Activated CD8-positive, alpha-beta T cell treated with anti-CD3 and anti-CD28 coated beads for 36 hours (primary cell): ENCODE measurements at regions of chr1 and their contacts with region 1.

Region 1: GRCh38 chr1:66503841-66504470 is 30.0 kb upstream of the SGIP1 start:
- DNase-seq: peak; percentile 70
- ATAC-seq: peak; percentile 74
- H3K4me3 Mint-ChIP-seq: no peak overlapping the region
- H3K27ac Mint-ChIP-seq: no peak overlapping the region
- H3K4me1 Mint-ChIP-seq: no peaks in the 10 kb centered on the region
- H3K27me3 Mint-ChIP-seq: peaks cover 11% of the 10 kb centered on the region
- CTCF ChIP-seq: peak; percentile 80

Region 2: GRCh38 chr1:66253330-66253921 is 250.5 kb before region 1 on chr1:
- CTCF ChIA-PET with region 1: interaction called, 23 read pairs
- POLR2A ChIA-PET with region 1: no interaction called
- intact Hi-C with region 1: no loop called
- DNase-seq: no peak
- ATAC-seq: peak; percentile 89
- H3K4me3 Mint-ChIP-seq: no peak overlapping the region
- H3K27ac Mint-ChIP-seq: no peak overlapping the region
- H3K4me1 Mint-ChIP-seq: peaks cover 46% of the 10 kb centered on the region
- H3K27me3 Mint-ChIP-seq: peaks cover 1% of the 10 kb centered on the region
- CTCF ChIP-seq: peak; percentile 83

Region 3: GRCh38 chr1:66452162-66452561 is 51.8 kb before region 1 on chr1:
- CTCF ChIA-PET with region 1: interaction called, 11 read pairs
- POLR2A ChIA-PET with region 1: no interaction called
- intact Hi-C with region 1: no loop called
- DNase-seq: no peak
- ATAC-seq: no peak
- H3K4me3 Mint-ChIP-seq: no peak overlapping the region
- H3K27ac Mint-ChIP-seq: no peak overlapping the region
- H3K4me1 Mint-ChIP-seq: no peaks in the 10 kb centered on the region
- H3K27me3 Mint-ChIP-seq: peaks cover 9% of the 10 kb centered on the region
- CTCF ChIP-seq: no peak

Region 4: GRCh38 chr1:66490816-66491215 is 13.1 kb before region 1 on chr1:
- CTCF ChIA-PET with region 1: interaction called, 22 read pairs
- POLR2A ChIA-PET with region 1: no interaction called
- intact Hi-C with region 1: no loop called
- DNase-seq: no peak
- ATAC-seq: no peak
- H3K4me3 Mint-ChIP-seq: no peak overlapping the region
- H3K27ac Mint-ChIP-seq: no peak overlapping the region
- H3K4me1 Mint-ChIP-seq: no peaks in the 10 kb centered on the region
- H3K27me3 Mint-ChIP-seq: no peaks in the 10 kb centered on the region
- CTCF ChIP-seq: no peak

Region 5: DNA sequence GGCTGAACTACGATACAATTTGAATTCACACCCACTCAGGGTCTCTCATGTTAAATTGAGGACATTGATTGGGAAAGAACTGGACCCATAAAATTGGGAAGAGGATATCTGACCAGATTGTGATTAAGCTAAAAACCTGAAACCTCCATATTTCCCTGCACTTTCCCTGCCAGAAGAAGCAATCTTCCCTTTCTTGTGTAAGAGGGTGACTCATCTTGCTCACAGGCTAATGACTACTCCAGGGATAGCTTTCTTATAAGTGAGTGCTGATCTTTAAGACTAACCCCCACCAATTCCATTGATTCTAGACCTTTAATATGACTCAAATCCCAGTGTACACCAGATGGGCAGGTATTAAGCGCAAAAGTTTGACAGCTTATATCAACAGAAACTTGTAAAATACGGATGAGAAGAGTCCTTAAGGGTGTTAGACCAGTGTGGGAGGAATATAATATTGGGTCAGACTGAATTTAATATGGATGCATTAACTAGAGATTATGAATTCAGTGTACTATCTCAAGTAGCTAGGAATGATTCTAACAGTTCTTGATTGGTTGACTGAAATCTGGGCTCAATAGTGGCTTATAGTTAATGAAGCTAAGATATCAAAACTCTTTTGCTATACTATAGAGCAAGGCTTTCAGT is 17.9 kb after region 1 on chr1:
- CTCF ChIA-PET with region 1: interaction called, 11 read pairs
- POLR2A ChIA-PET with region 1: no interaction called
- intact Hi-C with region 1: no loop called
- DNase-seq: no peak
- ATAC-seq: no peak
- H3K4me3 Mint-ChIP-seq: no peak overlapping the region
- H3K27ac Mint-ChIP-seq: no peak overlapping the region
- H3K4me1 Mint-ChIP-seq: no peaks in the 10 kb centered on the region
- H3K27me3 Mint-ChIP-seq: no peaks in the 10 kb centered on the region
- CTCF ChIP-seq: no peak